Right ventricle myocardium inferior (tissue), 1 donor: ENCODE measurements at regions of chr22 and their contacts with region 1.

Region 1: GRCh38 chr22:38755911-38756532 is at the start of gene SUN2:
- DNase-seq: peak; percentile 98
- ATAC-seq: peak; percentile 90
- total RNA-seq, gene SUN2: 126 TPM

Region 2: DNA sequence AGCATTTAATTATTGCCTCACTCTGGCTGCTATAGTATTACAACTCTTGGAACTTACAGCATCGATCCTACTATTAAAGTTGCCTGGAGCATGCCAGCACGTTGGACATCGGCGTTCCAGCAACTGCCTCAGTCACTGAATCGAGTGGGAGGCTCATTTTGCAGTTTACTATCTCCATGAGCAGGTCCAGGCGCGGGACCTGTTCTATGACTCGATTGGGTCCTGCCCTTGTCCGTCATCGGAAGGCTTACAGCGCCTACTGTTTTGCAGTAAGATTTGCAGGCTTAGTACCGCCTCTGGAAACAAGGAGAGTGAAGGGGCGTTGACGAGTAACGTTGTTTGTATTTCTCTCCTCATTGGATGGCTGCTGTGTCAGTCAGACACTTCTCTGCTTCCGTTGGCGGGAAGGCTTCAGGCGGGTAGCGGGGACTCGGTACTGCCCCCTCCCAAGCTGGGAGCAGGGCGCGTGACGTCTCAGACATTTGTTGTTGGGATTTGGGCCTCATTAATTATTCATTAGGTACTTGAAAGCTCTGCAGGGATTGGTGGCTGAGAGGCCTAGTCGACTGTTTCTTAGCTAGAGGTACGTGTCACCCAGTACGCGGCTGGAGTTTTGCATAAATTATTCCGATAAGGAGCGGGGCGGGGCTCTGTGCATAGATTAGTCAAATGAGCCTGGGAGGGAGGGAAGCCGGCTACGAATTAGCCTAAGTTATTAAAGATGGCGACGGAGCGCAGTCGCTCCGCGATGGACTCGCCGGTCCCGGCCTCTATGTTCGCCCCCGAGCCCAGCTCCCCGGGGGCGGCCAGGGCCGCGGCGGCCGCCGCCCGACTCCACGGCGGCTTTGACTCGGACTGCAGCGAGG is 50.6 kb before region 1 on chr22 and contains the start of gene GTPBP1:
- intact Hi-C with region 1: loop called (anchors 2 kb)
- DNase-seq: peak; percentile 99
- ATAC-seq: peak; percentile 94
- total RNA-seq, gene GTPBP1: 26.8 TPM

Region 3: DNA sequence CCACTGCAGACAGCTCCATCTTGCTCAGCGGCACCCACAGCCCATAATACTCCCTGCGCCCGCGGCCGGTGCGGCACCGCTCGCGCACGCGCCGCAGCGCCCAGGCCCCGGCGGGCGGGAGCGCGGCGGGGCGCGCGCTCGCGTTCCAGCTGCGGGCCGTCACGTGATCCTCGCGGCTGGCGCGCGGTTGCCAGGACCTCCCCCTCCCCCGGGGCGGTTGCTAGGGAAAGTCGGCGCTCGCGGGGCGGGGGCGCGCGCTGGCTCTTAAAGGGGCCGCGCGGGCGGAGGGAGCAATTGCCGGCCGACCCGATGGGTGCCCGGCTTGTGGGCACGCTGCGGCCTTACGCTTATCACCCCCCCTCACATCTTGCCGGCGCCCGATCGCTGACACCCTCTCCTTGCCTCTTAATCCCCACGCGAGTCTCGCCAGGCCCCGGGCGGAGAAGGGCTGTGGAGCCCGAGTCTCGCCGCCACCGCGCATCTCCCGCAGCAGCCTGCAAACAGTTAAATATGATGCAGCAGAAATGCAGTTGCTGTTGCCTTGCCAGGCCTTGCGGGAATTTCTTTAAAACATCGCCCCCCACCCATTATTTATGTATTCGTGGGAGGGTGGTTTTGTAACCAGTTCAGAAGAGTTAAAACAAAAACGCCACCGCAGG is 116.3 kb after region 1 on chr22 and contains the start of gene CBX6:
- intact Hi-C with region 1: no loop called
- DNase-seq: peak; percentile 98
- ATAC-seq: peak; percentile 90
- total RNA-seq, gene CBX6: 39.3 TPM

Region 4: GRCh38 chr22:38901111-38901641 is 145.2 kb after region 1 on chr22:
- intact Hi-C with region 1: no loop called
- DNase-seq: no peak
- ATAC-seq: no peak